Ascending aorta (tissue), 2 donors: ENCODE measurements at regions of chr7 and their contacts with region 1.

Region 1: DNA sequence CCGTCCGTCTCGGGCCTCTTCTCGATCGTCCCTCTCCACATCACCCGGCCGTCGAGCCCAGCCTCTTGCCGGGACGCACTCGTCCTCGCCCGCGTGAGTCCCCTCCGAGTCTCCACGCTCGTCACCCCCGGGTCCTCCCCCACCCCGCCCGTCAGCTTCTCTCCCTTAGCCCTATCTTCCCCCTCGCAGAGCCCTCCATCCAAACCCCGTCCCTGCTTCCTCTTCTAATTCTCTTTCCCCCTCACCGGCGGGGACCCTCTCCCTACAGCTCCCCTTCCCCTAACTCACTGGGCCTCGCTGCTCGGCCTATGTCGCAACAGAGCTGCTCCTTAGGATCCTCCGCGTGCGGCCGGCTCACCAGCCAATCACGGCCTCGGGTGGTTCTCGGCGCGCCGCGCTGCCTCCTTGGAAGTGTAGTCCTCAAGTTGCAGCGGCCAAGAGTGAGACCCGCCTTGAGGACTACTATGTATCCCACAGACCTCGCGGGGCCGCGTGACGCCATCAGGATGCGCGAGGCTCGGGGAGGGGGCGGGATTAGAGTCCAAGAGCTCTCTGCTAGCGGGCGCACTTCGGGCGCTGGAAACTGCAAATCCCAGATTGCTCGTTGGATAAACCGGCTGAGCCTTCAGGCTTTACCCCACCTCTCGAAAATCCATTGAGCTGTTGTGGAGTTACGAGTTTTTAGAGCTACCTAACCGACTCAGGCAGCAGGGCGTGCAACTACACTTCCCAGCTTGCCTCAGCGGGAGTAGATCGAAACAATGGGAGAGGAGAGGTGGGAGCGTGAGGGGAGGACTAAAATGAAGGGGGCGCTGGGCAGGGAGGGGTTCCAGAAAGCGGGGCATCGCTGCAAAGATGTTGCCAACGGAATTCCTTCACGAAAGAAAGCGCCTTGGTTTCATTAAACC is at the start of gene ABCF2:
- DNase-seq: peak; percentile 98 to 100
- H3K4me3 ChIP-seq: peak within 1 kb of the TSS; percentile 79 to 94
- H3K27ac ChIP-seq: peak within 1 kb of the TSS; percentile 63 to 72
- H3K4me1 ChIP-seq: peaks cover 7 to 12% of the 10 kb centered on the region in 2 donors
- H3K27me3 ChIP-seq: no peaks in the 10 kb centered on the region
- CTCF ChIP-seq: no peak
- total RNA-seq, gene ABCF2: 85.3 TPM

Region 2: DNA sequence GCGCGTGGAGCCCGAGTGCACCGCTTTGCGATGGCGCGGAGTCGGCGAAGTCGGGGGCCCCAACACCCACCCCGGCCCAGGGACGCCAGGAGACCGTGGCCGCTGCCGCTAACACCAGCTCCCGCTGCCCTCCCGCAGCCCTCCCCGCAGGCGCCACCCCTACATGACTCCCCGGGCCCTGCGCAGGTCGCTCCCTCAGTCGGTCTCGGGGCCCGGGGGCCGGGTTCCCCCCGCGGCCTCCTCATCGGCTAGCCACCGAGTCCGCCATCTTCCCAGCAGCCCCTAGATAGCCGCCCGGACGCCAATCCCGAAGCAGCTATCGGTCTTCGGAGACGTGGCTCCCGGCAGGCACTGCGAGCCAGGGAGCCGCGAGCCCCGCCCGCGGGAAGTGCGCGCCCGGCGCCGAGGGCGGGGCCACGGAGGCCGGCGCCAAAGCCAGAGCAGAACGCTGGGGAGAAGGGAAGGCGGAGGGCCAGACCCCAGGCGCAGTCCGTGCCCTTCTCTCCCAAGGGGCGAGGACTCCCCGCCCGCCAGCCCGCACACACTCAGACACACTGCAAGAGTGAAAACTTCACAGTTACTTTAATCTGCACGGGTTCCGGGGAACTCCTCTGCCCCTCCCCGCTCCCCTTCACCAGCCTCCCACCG is 146.5 kb before region 1 on chr7 and contains the start of gene FASTK:
- intact Hi-C with region 1: loop called (anchors 1 kb)
- DNase-seq: peak; percentile 84 to 95
- H3K4me3 ChIP-seq: peak within 1 kb of the TSS; percentile 75 to 87
- H3K27ac ChIP-seq: peak within 1 kb of the TSS; percentile 95 to 96
- H3K4me1 ChIP-seq: peaks cover 24 to 35% of the 10 kb centered on the region in 2 donors
- H3K27me3 ChIP-seq: no peaks in the 10 kb centered on the region
- CTCF ChIP-seq: no peak
- total RNA-seq, gene FASTK: 121 TPM

Region 3: GRCh38 chr7:151251328-151251972 is 24.3 kb after region 1 on chr7:
- intact Hi-C with region 1: loop called (anchors 1 kb)
- DNase-seq: peak in 1 of 2 donors; percentile 81
- H3K4me3 ChIP-seq: peak overlapping the region; percentile 74 to 87
- H3K27ac ChIP-seq: peak overlapping the region; percentile 95 to 99
- H3K4me1 ChIP-seq: peaks cover 21 to 43% of the 10 kb centered on the region in 2 donors
- H3K27me3 ChIP-seq: no peaks in the 10 kb centered on the region
- CTCF ChIP-seq: no peak